A673 (cell line): ENCODE measurements at regions of chr3 and their contacts with region 1.

Region 1: GRCh38 chr3:129144786-129145185 is 16.1 kb downstream of the ISY1 start:
- DNase-seq: no peak
- H3K4me3 ChIP-seq: no peak overlapping the region
- H3K27ac ChIP-seq: no peak overlapping the region
- H3K4me1 ChIP-seq: no peaks in the 10 kb centered on the region
- H3K27me3 ChIP-seq: no peaks in the 10 kb centered on the region
- CTCF ChIP-seq: no peak

Region 2: GRCh38 chr3:129316131-129317013 is 171.6 kb after region 1 on chr3:
- CTCF ChIA-PET with region 1: no interaction called
- POLR2A ChIA-PET with region 1: interaction called, 11 read pairs
- intact Hi-C with region 1: no loop called
- DNase-seq: peak; percentile 88
- H3K4me3 ChIP-seq: peak overlapping the region; percentile 98
- H3K27ac ChIP-seq: peak overlapping the region; percentile 88
- H3K4me1 ChIP-seq: peaks cover 11% of the 10 kb centered on the region
- H3K27me3 ChIP-seq: no peaks in the 10 kb centered on the region
- CTCF ChIP-seq: peak; percentile 84